ENCODE measurements at regions of chr3 and their contacts with region 1.

Region 1: GRCh38 chr3:119579366-119580165 is at the start of gene ADPRH:
- DNase-seq: no peak
- ATAC-seq: peak; percentile 80
- H3K4me3 ChIP-seq: peak within 1 kb of the TSS; percentile 84
- H3K27ac ChIP-seq: peak within 1 kb of the TSS; percentile 97
- H3K4me1 ChIP-seq: peaks cover 17% of the 10 kb centered on the region
- H3K27me3 ChIP-seq: no peaks in the 10 kb centered on the region
- CTCF ChIP-seq: no peak
- EP300 ChIP-seq: no peak
- POLR2A ChIP-seq: peak; percentile 80
- RAD21 ChIP-seq: no peak
- polyA plus RNA-seq, gene ADPRH: 2.3 to 3.7 TPM

Region 2: DNA sequence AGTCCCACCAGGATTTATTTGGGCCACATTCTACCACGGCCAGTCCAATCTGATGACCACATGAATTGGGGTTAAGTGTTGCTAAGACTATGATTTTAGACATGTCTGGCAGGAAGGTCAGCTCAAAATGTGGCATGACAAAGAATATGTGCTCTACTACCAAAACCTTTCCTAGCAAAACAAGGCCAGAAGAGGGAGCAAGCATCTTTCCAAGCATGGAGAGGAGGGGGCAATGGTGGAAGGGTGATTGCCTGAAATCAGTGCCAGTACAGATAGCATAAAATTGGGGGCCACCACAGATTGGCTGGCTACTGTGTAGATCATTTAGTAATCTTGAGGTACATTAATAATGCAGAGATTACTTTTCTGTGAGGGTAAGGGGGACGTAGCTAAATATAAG is 159.4 kb before region 1 on chr3:
- CTCF ChIA-PET with region 1: no interaction called
- POLR2A ChIA-PET with region 1: no interaction called
- RAD21 ChIA-PET with region 1: no interaction called
- SMC1A ChIA-PET with region 1: no interaction called
- in situ Hi-C with region 1: no loop called
- intact Hi-C with region 1: no loop called
- DNase-seq: no peak
- ATAC-seq: no peak
- H3K4me3 ChIP-seq: no peak overlapping the region
- H3K27ac ChIP-seq: no peak overlapping the region
- H3K4me1 ChIP-seq: no peaks in the 10 kb centered on the region
- H3K27me3 ChIP-seq: no peaks in the 10 kb centered on the region
- CTCF ChIP-seq: no peak; a peak in 1 of 6 replicates
- EP300 ChIP-seq: no peak
- POLR2A ChIP-seq: no peak
- RAD21 ChIP-seq: peak; percentile 28; the same call in 1 of the 2 replicates

Region 3: GRCh38 chr3:119594076-119594475 is 14.5 kb after region 1 on chr3:
- CTCF ChIA-PET with region 1: interaction called, 56 read pairs
- POLR2A ChIA-PET with region 1: interaction called, 133 read pairs
- RAD21 ChIA-PET with region 1: interaction called, 76 read pairs
- SMC1A ChIA-PET with region 1: interaction called, 62 read pairs
- in situ Hi-C with region 1: no loop called
- intact Hi-C with region 1: loop called (anchors 1 kb)
- DNase-seq: no peak
- ATAC-seq: no peak
- H3K4me3 ChIP-seq: no peak overlapping the region
- H3K27ac ChIP-seq: no peak overlapping the region
- H3K4me1 ChIP-seq: peaks cover 36% of the 10 kb centered on the region
- H3K27me3 ChIP-seq: no peaks in the 10 kb centered on the region
- CTCF ChIP-seq: no peak
- EP300 ChIP-seq: no peak
- POLR2A ChIP-seq: no peak
- RAD21 ChIP-seq: no peak

Region 4: GRCh38 chr3:119690043-119690656 is 110.6 kb after region 1 on chr3:
- CTCF ChIA-PET with region 1: no interaction called
- POLR2A ChIA-PET with region 1: no interaction called
- RAD21 ChIA-PET with region 1: no interaction called
- SMC1A ChIA-PET with region 1: no interaction called
- in situ Hi-C with region 1: no loop called
- intact Hi-C with region 1: no loop called
- DNase-seq: no peak
- ATAC-seq: peak; percentile 62
- H3K4me3 ChIP-seq: no peak overlapping the region
- H3K27ac ChIP-seq: no peak overlapping the region
- H3K4me1 ChIP-seq: no peaks in the 10 kb centered on the region
- H3K27me3 ChIP-seq: no peaks in the 10 kb centered on the region
- CTCF ChIP-seq: peak; percentile 21 to 53 (median 23); a peak in 4 of 6 replicates
- EP300 ChIP-seq: no peak
- POLR2A ChIP-seq: no peak
- RAD21 ChIP-seq: no peak

Region 5: DNA sequence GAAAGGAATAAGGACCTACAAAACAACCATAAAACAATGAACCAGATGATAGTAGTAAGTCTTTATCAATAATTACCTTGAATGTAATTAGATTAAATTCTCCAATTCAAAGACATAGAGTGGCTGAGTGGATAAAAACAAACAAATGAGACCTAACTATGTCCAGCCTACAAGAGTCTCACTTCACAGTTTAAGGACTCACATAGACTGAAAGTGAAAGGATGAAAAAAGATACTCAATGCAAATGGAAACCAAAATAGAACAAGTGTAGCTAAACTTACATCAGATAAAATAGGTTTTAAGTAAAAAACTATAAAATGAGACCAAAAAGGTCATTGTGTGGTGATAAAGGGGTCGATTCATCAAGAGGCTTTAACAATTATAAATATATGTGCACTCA is 180.4 kb after region 1 on chr3:
- CTCF ChIA-PET with region 1: no interaction called
- POLR2A ChIA-PET with region 1: no interaction called
- RAD21 ChIA-PET with region 1: no interaction called
- SMC1A ChIA-PET with region 1: no interaction called
- in situ Hi-C with region 1: no loop called
- intact Hi-C with region 1: no loop called
- DNase-seq: no peak
- ATAC-seq: peak; percentile 90
- H3K4me3 ChIP-seq: no peak overlapping the region
- H3K27ac ChIP-seq: no peak overlapping the region
- H3K4me1 ChIP-seq: no peaks in the 10 kb centered on the region; the same call in 1 of the 2 replicates
- H3K27me3 ChIP-seq: no peaks in the 10 kb centered on the region
- CTCF ChIP-seq: no peak
- EP300 ChIP-seq: no peak
- POLR2A ChIP-seq: no peak
- RAD21 ChIP-seq: no peak

Region 6: DNA sequence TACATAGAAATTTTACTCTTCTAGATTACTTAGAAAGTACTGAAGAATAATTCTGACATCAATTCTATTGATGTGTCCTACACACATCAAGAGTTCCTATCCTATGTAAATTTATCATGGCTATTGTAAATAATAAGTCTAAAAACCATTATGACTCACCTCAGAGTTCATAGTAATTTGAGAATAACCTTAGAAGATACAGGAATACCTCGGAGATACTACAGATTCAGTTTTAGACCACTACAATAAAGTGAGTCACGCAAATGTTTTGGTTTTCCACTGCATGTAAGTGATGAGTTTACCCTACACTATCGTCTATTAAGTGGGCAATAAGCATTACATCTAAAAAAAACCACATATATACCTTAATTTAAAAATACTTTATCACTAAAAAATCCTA is 277.1 kb after region 1 on chr3:
- CTCF ChIA-PET with region 1: no interaction called
- POLR2A ChIA-PET with region 1: no interaction called
- RAD21 ChIA-PET with region 1: no interaction called
- SMC1A ChIA-PET with region 1: no interaction called
- in situ Hi-C with region 1: no loop called
- intact Hi-C with region 1: no loop called
- DNase-seq: no peak
- ATAC-seq: no peak
- H3K4me3 ChIP-seq: no peak overlapping the region
- H3K27ac ChIP-seq: no peak overlapping the region
- H3K4me1 ChIP-seq: no peaks in the 10 kb centered on the region
- H3K27me3 ChIP-seq: no peaks in the 10 kb centered on the region
- CTCF ChIP-seq: no peak
- EP300 ChIP-seq: no peak
- POLR2A ChIP-seq: no peak
- RAD21 ChIP-seq: no peak

Measured in GM12878 (cell line).